ENCODE measurements at regions of chr4 and their contacts with region 1.

Region 1: DNA sequence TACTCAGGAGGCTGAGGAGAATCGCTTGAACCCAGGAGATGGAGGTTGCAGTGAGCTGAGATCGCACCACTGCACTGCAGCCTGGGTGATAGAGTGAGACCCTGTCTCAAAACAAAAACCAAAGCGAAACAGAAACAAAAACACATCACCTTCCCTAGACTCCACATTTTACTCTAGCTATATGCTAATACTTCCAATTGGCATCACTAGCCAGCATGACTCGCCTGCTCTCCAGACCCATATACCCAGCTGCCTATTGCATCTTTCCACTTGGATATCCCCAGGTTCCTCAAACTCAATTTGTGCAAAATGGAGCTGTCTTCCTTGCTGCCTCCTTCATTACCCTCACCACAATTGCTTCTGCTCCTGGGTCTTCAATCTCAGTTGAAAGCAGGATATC is 22.4 kb upstream of the LAP3 start:
- DNase-seq: no peak
- H3K4me3 Mint-ChIP-seq: no peak overlapping the region
- H3K27ac Mint-ChIP-seq: no peak overlapping the region
- H3K4me1 Mint-ChIP-seq: peaks cover 9% of the 10 kb centered on the region
- H3K27me3 Mint-ChIP-seq: peaks cover 15% of the 10 kb centered on the region

Region 2: GRCh38 chr4:17510582-17510981 is 44.0 kb before region 1 on chr4:
- CTCF ChIA-PET with region 1: interaction called, 14 read pairs
- POLR2A ChIA-PET with region 1: no interaction called
- DNase-seq: no peak
- H3K4me3 Mint-ChIP-seq: peak overlapping the region; percentile 45
- H3K27ac Mint-ChIP-seq: no peak overlapping the region
- H3K4me1 Mint-ChIP-seq: peaks cover 31% of the 10 kb centered on the region
- H3K27me3 Mint-ChIP-seq: peaks cover 3% of the 10 kb centered on the region

Region 3: GRCh38 chr4:17576932-17577665 is 22.5 kb after region 1 on chr4 and contains the start of gene LAP3:
- CTCF ChIA-PET with region 1: interaction called, 37 read pairs
- POLR2A ChIA-PET with region 1: interaction called, 26 read pairs
- DNase-seq: peak; percentile 99
- H3K4me3 Mint-ChIP-seq: peak within 1 kb of the TSS; percentile 97
- H3K27ac Mint-ChIP-seq: peak within 1 kb of the TSS; percentile 99
- H3K4me1 Mint-ChIP-seq: peaks cover 43% of the 10 kb centered on the region
- H3K27me3 Mint-ChIP-seq: no peaks in the 10 kb centered on the region
- total RNA-seq, gene LAP3: 180 to 182 TPM